CD8-positive, alpha-beta T cell (primary cell): ENCODE measurements at regions of chr21 and their contacts with region 1.

Region 1: DNA sequence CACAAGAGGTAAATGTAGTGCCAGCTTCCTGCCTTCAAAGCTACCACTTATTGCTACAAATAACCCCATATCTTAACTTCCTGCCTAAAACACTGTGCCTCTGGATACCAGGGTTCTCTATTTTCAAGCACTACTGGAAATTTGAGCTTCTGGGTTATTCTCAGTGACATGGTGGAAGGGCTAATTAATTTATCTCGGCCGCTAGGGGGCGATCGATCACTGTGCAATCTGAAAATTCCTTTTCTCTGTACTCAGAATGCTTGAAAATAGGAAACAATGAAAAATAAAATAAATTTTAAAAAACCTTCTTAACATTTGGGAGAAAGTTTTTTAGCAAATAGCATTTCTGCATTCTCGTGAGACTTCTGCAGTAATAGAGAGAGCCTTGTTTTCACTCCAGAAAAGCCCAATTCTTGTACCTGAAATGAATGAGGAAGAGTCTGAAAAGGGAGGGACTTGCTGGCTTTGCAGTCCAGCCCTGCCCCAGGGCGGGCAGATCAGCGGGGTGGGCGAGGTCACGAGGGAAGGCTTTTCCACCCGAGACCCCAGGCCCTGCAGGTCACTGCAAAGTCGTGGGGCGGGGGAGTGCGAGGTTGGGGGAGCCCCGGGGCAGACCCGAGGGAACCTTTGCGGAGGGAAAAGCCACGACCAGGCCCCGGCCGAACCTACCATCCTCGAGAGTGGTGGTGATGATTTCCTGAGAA is 276.7 kb downstream of the PCP4 start:
- DNase-seq: peak in 4 of 9 experiments; percentile 4 to 27 (median 23)
- ATAC-seq: no peak
- H3K4me3 ChIP-seq: no peak overlapping the region
- H3K4me3 Mint-ChIP-seq: no peak overlapping the region
- H3K27ac ChIP-seq: no peak overlapping the region
- H3K27ac Mint-ChIP-seq: no peak overlapping the region
- H3K4me1 ChIP-seq: no peaks in the 10 kb centered on the region
- H3K4me1 Mint-ChIP-seq: no peaks in the 10 kb centered on the region
- H3K27me3 ChIP-seq: no peaks in the 10 kb centered on the region
- H3K27me3 Mint-ChIP-seq: no peaks in the 10 kb centered on the region
- CTCF ChIP-seq: peak; percentile 33

Region 2: DNA sequence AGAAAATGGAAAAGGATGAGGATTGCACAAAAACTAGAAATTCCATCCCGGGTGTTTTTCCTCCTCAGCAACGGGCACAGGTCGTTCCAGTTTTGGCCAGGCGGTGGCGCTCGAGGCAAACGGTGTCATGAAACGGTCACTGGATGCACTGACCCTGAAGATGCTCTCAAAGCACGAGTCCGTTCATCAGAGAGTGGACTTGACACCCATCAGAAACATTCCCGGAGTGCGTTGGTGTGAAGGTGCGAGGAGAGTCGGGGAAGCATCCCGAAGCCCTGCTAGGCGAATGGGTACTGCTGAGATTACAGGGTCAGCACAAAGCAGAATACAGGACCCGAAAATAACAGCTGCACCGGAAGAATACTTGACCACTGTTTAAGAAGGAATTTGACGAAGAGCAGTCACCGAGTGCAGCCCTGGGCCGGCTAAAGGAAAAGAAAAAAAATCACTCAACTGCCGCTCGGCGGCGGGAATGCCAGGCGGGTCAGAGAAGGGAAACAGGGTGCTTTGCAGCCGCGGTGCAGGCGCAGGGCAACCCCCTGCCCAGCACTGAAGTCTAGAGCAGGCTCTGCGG is 1409.9 kb before region 1 on chr21:
- CTCF ChIA-PET with region 1: no interaction called
- POLR2A ChIA-PET with region 1: no interaction called
- intact Hi-C with region 1: no loop called
- DNase-seq: peak; percentile 48 to 84 (median 68)
- ATAC-seq: peak; percentile 62
- H3K4me3 ChIP-seq: peak overlapping the region; percentile 22 to 68
- H3K4me3 Mint-ChIP-seq: peak overlapping the region; percentile 79
- H3K27ac ChIP-seq: no peak overlapping the region
- H3K27ac Mint-ChIP-seq: no peak overlapping the region
- H3K4me1 ChIP-seq: peaks cover 4% of the 10 kb centered on the region
- H3K4me1 Mint-ChIP-seq: peaks cover 9% of the 10 kb centered on the region
- H3K27me3 ChIP-seq: peaks cover 8 to 14% of the 10 kb centered on the region in 2 experiments
- H3K27me3 Mint-ChIP-seq: peaks cover 19% of the 10 kb centered on the region
- CTCF ChIP-seq: peak; percentile 99

Region 3: GRCh38 chr21:40099809-40100208 is 44.2 kb before region 1 on chr21:
- CTCF ChIA-PET with region 1: no interaction called
- POLR2A ChIA-PET with region 1: no interaction called
- intact Hi-C with region 1: no loop called
- DNase-seq: no peak
- ATAC-seq: no peak
- H3K4me3 ChIP-seq: no peak overlapping the region
- H3K4me3 Mint-ChIP-seq: no peak overlapping the region
- H3K27ac ChIP-seq: no peak overlapping the region
- H3K27ac Mint-ChIP-seq: no peak overlapping the region
- H3K4me1 ChIP-seq: no peaks in the 10 kb centered on the region
- H3K4me1 Mint-ChIP-seq: no peaks in the 10 kb centered on the region
- H3K27me3 ChIP-seq: no peaks in the 10 kb centered on the region
- H3K27me3 Mint-ChIP-seq: no peaks in the 10 kb centered on the region
- CTCF ChIP-seq: no peak

Region 4: GRCh38 chr21:40166291-40166850 is 22.4 kb after region 1 on chr21:
- CTCF ChIA-PET with region 1: no interaction called
- POLR2A ChIA-PET with region 1: no interaction called
- intact Hi-C with region 1: no loop called
- DNase-seq: no peak
- ATAC-seq: no peak
- H3K4me3 ChIP-seq: no peak overlapping the region
- H3K4me3 Mint-ChIP-seq: no peak overlapping the region
- H3K27ac ChIP-seq: no peak overlapping the region
- H3K27ac Mint-ChIP-seq: no peak overlapping the region
- H3K4me1 ChIP-seq: no peaks in the 10 kb centered on the region
- H3K4me1 Mint-ChIP-seq: no peaks in the 10 kb centered on the region
- H3K27me3 ChIP-seq: no peaks in the 10 kb centered on the region
- H3K27me3 Mint-ChIP-seq: peaks cover 3% of the 10 kb centered on the region
- CTCF ChIP-seq: no peak

Region 5: DNA sequence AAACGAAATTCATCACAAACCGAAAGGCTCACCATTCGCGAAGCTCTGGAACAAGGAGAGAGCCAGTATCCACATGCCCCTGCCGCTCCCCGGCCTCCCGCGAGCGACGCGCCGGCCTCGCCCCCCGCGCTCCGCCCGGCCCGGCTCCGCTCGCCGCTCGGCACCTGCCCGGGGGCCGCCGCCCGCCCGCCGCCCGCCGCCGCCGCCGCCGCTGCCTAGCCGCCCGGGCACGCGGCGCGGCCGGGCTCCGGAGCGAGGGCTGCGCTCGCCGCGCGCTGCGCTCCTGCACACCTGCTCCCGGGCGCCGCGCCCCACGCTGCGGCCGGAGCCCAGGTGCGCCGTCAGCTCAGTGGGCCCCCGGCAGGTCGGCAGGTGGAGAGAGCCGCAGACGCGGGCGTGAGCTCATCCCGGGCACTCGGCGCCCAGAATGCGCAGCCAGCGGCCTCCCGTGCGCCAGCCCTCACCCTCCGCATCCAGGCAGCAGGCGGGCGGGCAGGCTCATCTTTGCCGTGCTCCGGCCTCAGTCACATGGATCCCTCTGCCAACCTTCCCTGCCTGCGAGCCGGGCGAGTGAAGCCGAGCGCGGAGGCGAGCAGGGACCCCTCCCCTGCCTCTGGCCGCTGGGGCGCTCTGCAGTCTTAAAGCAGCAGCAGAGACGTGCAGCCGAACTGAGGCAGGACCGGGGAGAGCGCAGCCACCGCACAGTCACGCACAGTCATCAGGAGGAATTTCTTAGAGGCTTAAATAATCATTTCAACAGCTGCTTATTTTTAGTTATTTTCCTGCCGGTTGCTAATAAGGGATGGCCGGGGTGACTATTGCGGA is 702.8 kb after region 1 on chr21 and contains the start of gene DSCAM:
- CTCF ChIA-PET with region 1: no interaction called
- POLR2A ChIA-PET with region 1: no interaction called
- intact Hi-C with region 1: no loop called
- DNase-seq: no peak
- ATAC-seq: no peak
- H3K4me3 ChIP-seq: no peak within 1 kb of the TSS
- H3K4me3 Mint-ChIP-seq: no peak within 1 kb of the TSS
- H3K27ac ChIP-seq: no peak within 1 kb of the TSS
- H3K27ac Mint-ChIP-seq: no peak within 1 kb of the TSS
- H3K4me1 ChIP-seq: no peaks in the 10 kb centered on the region
- H3K4me1 Mint-ChIP-seq: no peaks in the 10 kb centered on the region
- H3K27me3 ChIP-seq: peaks cover 0 to 11% of the 10 kb centered on the region in 2 experiments
- H3K27me3 Mint-ChIP-seq: peaks cover 44% of the 10 kb centered on the region
- CTCF ChIP-seq: no peak
- total RNA-seq, gene DSCAM: not detected

Region 6: GRCh38 chr21:41133896-41134522 is 990.0 kb after region 1 on chr21:
- CTCF ChIA-PET with region 1: interaction called, 5 read pairs
- POLR2A ChIA-PET with region 1: no interaction called
- intact Hi-C with region 1: loop called in 1 of 2 experiments (anchors 10 kb)
- DNase-seq: no peak
- ATAC-seq: no peak
- H3K4me3 ChIP-seq: no peak overlapping the region
- H3K4me3 Mint-ChIP-seq: no peak overlapping the region
- H3K27ac ChIP-seq: no peak overlapping the region
- H3K27ac Mint-ChIP-seq: no peak overlapping the region
- H3K4me1 ChIP-seq: no peaks in the 10 kb centered on the region
- H3K4me1 Mint-ChIP-seq: no peaks in the 10 kb centered on the region
- H3K27me3 ChIP-seq: no peaks in the 10 kb centered on the region
- H3K27me3 Mint-ChIP-seq: peaks cover 7% of the 10 kb centered on the region
- CTCF ChIP-seq: no peak